CD8-positive, alpha-beta T cell (primary cell): ENCODE measurements at regions of chr14 and their contacts with region 1.

Region 1: GRCh38 chr14:61388173-61388975 is 67.0 kb downstream of the PRKCH start:
- DNase-seq: peak in 4 of 9 experiments; percentile 43 to 81 (median 54)
- ATAC-seq: peak; percentile 69
- H3K4me3 ChIP-seq: peak overlapping the region; percentile 32 to 46
- H3K4me3 Mint-ChIP-seq: no peak overlapping the region
- H3K27ac ChIP-seq: peak overlapping the region; percentile 53 to 90
- H3K27ac Mint-ChIP-seq: no peak overlapping the region
- H3K4me1 ChIP-seq: peaks cover 98% of the 10 kb centered on the region
- H3K4me1 Mint-ChIP-seq: no peaks in the 10 kb centered on the region
- H3K27me3 ChIP-seq: no peaks in the 10 kb centered on the region
- H3K27me3 Mint-ChIP-seq: no peaks in the 10 kb centered on the region
- CTCF ChIP-seq: no peak

Region 2: DNA sequence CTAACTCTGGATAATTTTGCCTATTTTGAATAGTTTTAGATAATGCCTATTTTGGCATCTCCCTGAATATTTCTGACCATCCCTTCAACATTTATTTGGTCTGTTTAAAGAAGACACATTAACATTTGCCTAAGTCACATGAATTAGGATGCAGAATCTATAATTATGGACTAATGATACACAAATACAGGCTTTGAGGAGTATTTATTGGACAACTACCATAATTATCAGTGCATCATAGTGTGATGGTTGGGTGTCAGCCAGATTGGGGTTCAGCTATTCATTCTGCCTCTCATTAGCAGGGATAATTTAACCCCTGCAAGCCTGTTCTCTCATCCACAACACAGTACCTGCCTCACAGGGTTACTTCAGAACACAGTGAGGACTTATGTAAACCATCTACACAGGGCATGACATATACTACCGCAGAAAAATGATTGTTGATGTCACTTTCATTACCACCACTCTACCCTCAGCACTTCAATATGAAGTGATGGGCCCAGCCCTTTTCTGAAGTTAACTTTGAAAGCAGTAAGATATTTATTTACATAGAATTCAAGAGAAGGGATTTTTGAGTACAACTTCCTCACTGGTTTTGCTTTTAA is 52.6 kb before region 1 on chr14:
- CTCF ChIA-PET with region 1: interaction called, 5 read pairs
- POLR2A ChIA-PET with region 1: interaction called, 17 read pairs
- intact Hi-C with region 1: no loop called
- DNase-seq: peak in 4 of 9 experiments; percentile 46 to 87 (median 63)
- ATAC-seq: peak; percentile 62
- H3K4me3 ChIP-seq: peak overlapping the region; percentile 1 to 27
- H3K4me3 Mint-ChIP-seq: peak overlapping the region; percentile 83
- H3K27ac ChIP-seq: peak overlapping the region; percentile 86 to 90
- H3K27ac Mint-ChIP-seq: peak overlapping the region; percentile 98
- H3K4me1 ChIP-seq: peaks cover 89% of the 10 kb centered on the region
- H3K4me1 Mint-ChIP-seq: peaks cover 84% of the 10 kb centered on the region
- H3K27me3 ChIP-seq: no peaks in the 10 kb centered on the region
- H3K27me3 Mint-ChIP-seq: no peaks in the 10 kb centered on the region
- CTCF ChIP-seq: no peak

Region 3: GRCh38 chr14:61342486-61342885 is 45.9 kb before region 1 on chr14:
- CTCF ChIA-PET with region 1: interaction called, 5 read pairs
- POLR2A ChIA-PET with region 1: interaction called, 5 read pairs
- intact Hi-C with region 1: loop called in 1 of 2 experiments (anchors 1 kb)
- DNase-seq: peak; percentile 60 to 94 (median 85)
- ATAC-seq: peak; percentile 49
- H3K4me3 ChIP-seq: peak overlapping the region in 1 of 2 experiments; percentile 25
- H3K4me3 Mint-ChIP-seq: peak overlapping the region; percentile 77
- H3K27ac ChIP-seq: peak overlapping the region; percentile 39 to 77
- H3K27ac Mint-ChIP-seq: peak overlapping the region; percentile 99
- H3K4me1 ChIP-seq: peaks cover 94% of the 10 kb centered on the region
- H3K4me1 Mint-ChIP-seq: peaks cover 95% of the 10 kb centered on the region
- H3K27me3 ChIP-seq: no peaks in the 10 kb centered on the region
- H3K27me3 Mint-ChIP-seq: no peaks in the 10 kb centered on the region
- CTCF ChIP-seq: no peak

Region 4: GRCh38 chr14:61368114-61368726 is 20.2 kb before region 1 on chr14:
- CTCF ChIA-PET with region 1: interaction called, 3 read pairs
- POLR2A ChIA-PET with region 1: interaction called, 5 read pairs
- intact Hi-C with region 1: loop called in 1 of 2 experiments (anchors 2 kb)
- DNase-seq: no peak
- ATAC-seq: no peak
- H3K4me3 ChIP-seq: no peak overlapping the region
- H3K4me3 Mint-ChIP-seq: peak overlapping the region; percentile 68
- H3K27ac ChIP-seq: peak overlapping the region in 1 of 2 experiments; percentile 68
- H3K27ac Mint-ChIP-seq: no peak overlapping the region
- H3K4me1 ChIP-seq: peaks cover 91% of the 10 kb centered on the region
- H3K4me1 Mint-ChIP-seq: peaks cover 33% of the 10 kb centered on the region
- H3K27me3 ChIP-seq: no peaks in the 10 kb centered on the region
- H3K27me3 Mint-ChIP-seq: no peaks in the 10 kb centered on the region
- CTCF ChIP-seq: no peak

Region 5: GRCh38 chr14:61403411-61403810 is 15.0 kb after region 1 on chr14:
- CTCF ChIA-PET with region 1: interaction called, 8 read pairs
- POLR2A ChIA-PET with region 1: interaction called, 25 read pairs
- intact Hi-C with region 1: loop called in 1 of 2 experiments (anchors 1 kb)
- DNase-seq: peak in 3 of 9 experiments; percentile 35 to 79 (median 63)
- ATAC-seq: peak; percentile 77
- H3K4me3 ChIP-seq: peak overlapping the region in 1 of 2 experiments; percentile 10
- H3K4me3 Mint-ChIP-seq: peak overlapping the region; percentile 62
- H3K27ac ChIP-seq: peak overlapping the region; percentile 15 to 82
- H3K27ac Mint-ChIP-seq: peak overlapping the region; percentile 95
- H3K4me1 ChIP-seq: peaks cover 89% of the 10 kb centered on the region
- H3K4me1 Mint-ChIP-seq: peaks cover 31% of the 10 kb centered on the region
- H3K27me3 ChIP-seq: no peaks in the 10 kb centered on the region
- H3K27me3 Mint-ChIP-seq: no peaks in the 10 kb centered on the region
- CTCF ChIP-seq: no peak

Region 6: GRCh38 chr14:61420326-61420725 is 32.0 kb after region 1 on chr14:
- CTCF ChIA-PET with region 1: no interaction called
- POLR2A ChIA-PET with region 1: interaction called, 3 read pairs
- intact Hi-C with region 1: loop called (anchors 1 to 5 kb)
- DNase-seq: peak in 5 of 9 experiments; percentile 43 to 66 (median 55)
- ATAC-seq: peak; percentile 62
- H3K4me3 ChIP-seq: no peak overlapping the region
- H3K4me3 Mint-ChIP-seq: peak overlapping the region; percentile 61
- H3K27ac ChIP-seq: peak overlapping the region in 1 of 2 experiments; percentile 51
- H3K27ac Mint-ChIP-seq: peak overlapping the region; percentile 96
- H3K4me1 ChIP-seq: peaks cover 85% of the 10 kb centered on the region
- H3K4me1 Mint-ChIP-seq: peaks cover 89% of the 10 kb centered on the region
- H3K27me3 ChIP-seq: no peaks in the 10 kb centered on the region
- H3K27me3 Mint-ChIP-seq: no peaks in the 10 kb centered on the region
- CTCF ChIP-seq: no peak

Region 7: DNA sequence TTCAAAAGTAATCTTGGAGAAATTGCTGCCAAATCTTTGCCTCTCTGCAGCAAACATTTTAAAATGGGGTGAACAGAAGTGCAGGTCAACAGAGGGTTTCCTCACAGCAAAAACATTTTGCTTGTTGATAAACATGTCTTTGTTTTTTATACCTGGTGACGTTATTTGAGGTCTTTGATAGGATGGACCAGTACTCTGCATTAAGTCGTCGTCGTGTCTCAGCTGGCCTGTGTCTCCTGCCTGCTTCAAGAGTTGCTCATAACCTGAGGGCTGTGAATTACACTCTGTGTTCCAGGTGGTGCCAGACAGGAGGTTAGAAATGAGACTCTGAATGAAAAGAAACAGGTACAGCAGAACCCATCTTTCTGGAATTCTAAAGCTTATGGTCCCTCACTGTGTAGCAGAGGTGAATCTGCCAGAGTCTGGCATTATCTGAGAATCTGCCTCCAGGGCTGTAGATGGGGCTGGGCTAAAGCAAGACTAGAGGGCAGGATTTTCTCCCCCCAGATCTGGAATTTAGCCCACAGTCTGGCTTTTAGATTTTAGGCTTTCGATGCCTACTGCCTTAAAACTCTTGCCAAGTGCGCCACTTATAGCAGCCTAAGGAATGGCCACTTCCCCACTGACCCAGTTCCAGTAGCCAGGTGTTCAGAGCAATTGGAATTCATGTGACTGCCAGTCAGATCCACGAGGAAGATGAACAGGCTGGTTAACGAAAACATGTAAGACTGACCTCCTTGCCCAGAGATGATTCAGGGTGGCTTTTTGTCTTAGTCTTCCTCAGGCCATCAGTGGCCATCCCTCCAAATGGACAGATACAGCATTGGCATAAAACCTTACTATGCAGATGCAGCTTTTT is 94.2 kb after region 1 on chr14:
- CTCF ChIA-PET with region 1: no interaction called
- POLR2A ChIA-PET with region 1: no interaction called
- intact Hi-C with region 1: no loop called
- DNase-seq: no peak
- ATAC-seq: no peak
- H3K4me3 ChIP-seq: no peak overlapping the region
- H3K4me3 Mint-ChIP-seq: no peak overlapping the region
- H3K27ac ChIP-seq: peak overlapping the region in 1 of 2 experiments; percentile 44
- H3K27ac Mint-ChIP-seq: peak overlapping the region; percentile 99
- H3K4me1 ChIP-seq: peaks cover 52% of the 10 kb centered on the region
- H3K4me1 Mint-ChIP-seq: peaks cover 79% of the 10 kb centered on the region
- H3K27me3 ChIP-seq: no peaks in the 10 kb centered on the region
- H3K27me3 Mint-ChIP-seq: no peaks in the 10 kb centered on the region
- CTCF ChIP-seq: no peak